ENCODE measurements at regions of chr1 and their contacts with region 1.

Region 1: DNA sequence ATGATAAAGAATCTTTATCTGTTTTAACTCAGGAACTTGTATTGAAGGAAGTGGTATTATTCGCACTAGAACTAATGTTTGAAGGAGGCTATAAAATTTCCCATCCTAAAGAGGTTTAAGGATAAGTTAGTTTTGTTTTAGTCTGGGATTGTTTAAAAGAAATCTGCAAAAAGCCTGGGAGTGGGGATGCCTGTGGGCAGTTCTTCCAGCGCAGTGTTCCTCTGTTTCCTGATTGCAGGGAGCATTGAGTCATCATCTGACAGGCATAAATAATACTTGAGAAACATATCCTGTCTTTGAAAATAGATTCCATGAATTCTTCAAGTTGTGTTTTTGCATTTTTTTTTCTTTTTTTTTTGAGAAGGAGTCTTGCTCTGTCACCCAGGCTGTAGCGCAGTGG is 350.8 kb upstream of the PTBP2 start:
- DNase-seq: no peak
- ATAC-seq: no peak
- H3K4me3 ChIP-seq: no peak overlapping the region
- H3K4me3 Mint-ChIP-seq: no peak overlapping the region
- H3K27ac ChIP-seq: no peak overlapping the region
- H3K27ac Mint-ChIP-seq: no peak overlapping the region
- H3K4me1 ChIP-seq: no peaks in the 10 kb centered on the region
- H3K4me1 Mint-ChIP-seq: no peaks in the 10 kb centered on the region
- H3K27me3 ChIP-seq: no peaks in the 10 kb centered on the region
- H3K27me3 Mint-ChIP-seq: no peaks in the 10 kb centered on the region
- CTCF ChIP-seq: no peak

Region 2: DNA sequence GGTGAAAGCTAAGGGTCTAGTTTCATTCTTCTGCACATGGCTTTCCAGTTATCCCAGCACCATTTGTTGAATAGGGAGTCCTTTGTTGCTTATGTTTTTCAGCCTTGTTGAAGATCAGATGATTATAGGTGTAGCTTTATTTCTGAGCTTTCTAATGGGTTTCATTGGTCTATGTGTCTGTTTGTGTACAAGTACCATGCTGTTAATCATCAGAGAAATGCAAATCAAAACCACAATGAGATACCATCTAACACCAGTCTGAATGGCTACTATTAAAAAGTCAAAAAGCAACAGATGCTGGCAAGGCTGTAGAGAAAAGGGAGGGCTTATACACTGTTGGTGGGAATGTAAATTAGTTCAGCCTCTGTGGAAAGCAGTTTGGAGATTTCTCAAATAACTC is 29.3 kb after region 1 on chr1:
- CTCF ChIA-PET with region 1: no interaction called
- POLR2A ChIA-PET with region 1: no interaction called
- intact Hi-C with region 1: loop called in 1 of 2 experiments (anchors 1 kb)
- DNase-seq: no peak
- ATAC-seq: no peak
- H3K4me3 ChIP-seq: no peak overlapping the region
- H3K4me3 Mint-ChIP-seq: no peak overlapping the region
- H3K27ac ChIP-seq: no peak overlapping the region
- H3K27ac Mint-ChIP-seq: no peak overlapping the region
- H3K4me1 ChIP-seq: no peaks in the 10 kb centered on the region
- H3K4me1 Mint-ChIP-seq: no peaks in the 10 kb centered on the region
- H3K27me3 ChIP-seq: no peaks in the 10 kb centered on the region
- H3K27me3 Mint-ChIP-seq: no peaks in the 10 kb centered on the region
- CTCF ChIP-seq: no peak

Region 3: DNA sequence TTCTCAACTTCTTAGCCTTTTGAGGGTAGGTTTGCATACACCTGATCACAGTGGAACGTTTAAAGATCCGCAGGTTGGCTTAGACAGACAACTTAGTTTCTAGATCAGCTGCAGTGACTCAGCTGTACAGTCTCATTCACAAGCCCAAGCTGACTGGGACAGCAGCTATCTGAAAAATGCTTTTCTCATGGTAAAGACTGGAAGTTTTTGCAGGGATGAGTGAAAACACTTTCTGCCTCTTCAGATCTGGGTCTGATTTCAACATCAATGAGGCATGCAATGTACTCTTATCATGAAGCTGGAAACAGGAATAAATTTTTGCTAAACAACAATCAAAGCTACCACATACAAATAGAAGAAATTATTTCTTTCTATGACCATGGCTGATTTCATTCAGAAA is 289.8 kb after region 1 on chr1:
- CTCF ChIA-PET with region 1: no interaction called
- POLR2A ChIA-PET with region 1: no interaction called
- intact Hi-C with region 1: no loop called
- DNase-seq: no peak
- ATAC-seq: no peak
- H3K4me3 ChIP-seq: no peak overlapping the region
- H3K4me3 Mint-ChIP-seq: no peak overlapping the region
- H3K27ac ChIP-seq: no peak overlapping the region
- H3K27ac Mint-ChIP-seq: no peak overlapping the region
- H3K4me1 ChIP-seq: no peaks in the 10 kb centered on the region
- H3K4me1 Mint-ChIP-seq: no peaks in the 10 kb centered on the region
- H3K27me3 ChIP-seq: no peaks in the 10 kb centered on the region
- H3K27me3 Mint-ChIP-seq: no peaks in the 10 kb centered on the region
- CTCF ChIP-seq: no peak